GM13977 (cell line): ENCODE measurements at regions of chr3 and their contacts with region 1.

Region 1: DNA sequence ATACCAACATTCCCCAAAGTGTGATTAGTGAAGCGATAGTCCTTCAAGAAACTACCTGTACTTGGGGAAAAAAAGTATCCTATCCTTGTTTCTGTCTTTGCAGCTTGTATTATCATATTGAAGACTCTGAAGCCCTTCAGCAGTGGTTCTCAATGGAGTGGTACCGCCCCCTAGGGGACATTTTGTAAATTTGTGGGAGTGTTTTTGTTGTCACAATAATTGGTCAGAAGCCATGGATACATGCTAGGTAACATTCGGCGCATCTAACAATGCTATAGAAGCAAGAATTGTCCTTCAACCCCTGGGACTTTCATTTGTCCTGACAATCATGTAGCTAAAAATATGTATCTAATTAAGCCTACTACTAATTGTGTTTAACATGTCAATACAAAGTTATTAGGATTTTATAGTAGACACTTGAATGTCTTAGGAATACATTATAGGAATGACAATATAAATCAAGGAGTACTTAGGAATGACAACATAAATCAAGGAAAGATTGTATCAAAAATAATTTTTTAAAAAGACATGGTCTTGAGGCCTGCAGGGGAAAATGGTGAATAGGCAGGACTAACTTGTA is 53.7 kb downstream of the NMD3 start:
- DNase-seq: peak; percentile 25
- CTCF ChIP-seq: peak; percentile 73

Region 2: DNA sequence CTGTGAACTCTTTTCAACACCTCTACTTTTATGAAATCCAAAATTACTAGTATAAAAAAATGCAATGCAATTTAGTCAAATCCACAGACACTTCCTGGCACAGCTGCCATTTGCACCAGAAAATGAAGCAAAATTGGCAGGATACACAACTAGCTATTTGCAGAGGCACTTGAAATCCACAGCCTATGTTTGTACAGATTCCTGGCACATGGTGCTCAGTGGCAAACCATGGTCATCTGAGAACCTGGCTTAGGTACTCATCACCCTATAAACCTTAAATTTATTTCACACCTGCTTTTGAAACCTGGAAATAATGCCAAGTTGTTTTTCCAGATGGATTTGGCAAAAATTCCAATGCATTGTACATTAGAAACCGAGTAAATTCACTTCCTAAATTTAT is 539.0 kb before region 1 on chr3:
- in situ Hi-C with region 1: no loop called
- DNase-seq: no peak
- CTCF ChIP-seq: no peak

Region 3: GRCh38 chr3:160784848-160785247 is 490.0 kb before region 1 on chr3:
- in situ Hi-C with region 1: no loop called
- DNase-seq: no peak
- CTCF ChIP-seq: no peak

Region 4: GRCh38 chr3:160956806-160957205 is 318.0 kb before region 1 on chr3:
- in situ Hi-C with region 1: loop called (anchors 10 kb)
- DNase-seq: peak; percentile 39
- CTCF ChIP-seq: peak; percentile 67

Region 5: DNA sequence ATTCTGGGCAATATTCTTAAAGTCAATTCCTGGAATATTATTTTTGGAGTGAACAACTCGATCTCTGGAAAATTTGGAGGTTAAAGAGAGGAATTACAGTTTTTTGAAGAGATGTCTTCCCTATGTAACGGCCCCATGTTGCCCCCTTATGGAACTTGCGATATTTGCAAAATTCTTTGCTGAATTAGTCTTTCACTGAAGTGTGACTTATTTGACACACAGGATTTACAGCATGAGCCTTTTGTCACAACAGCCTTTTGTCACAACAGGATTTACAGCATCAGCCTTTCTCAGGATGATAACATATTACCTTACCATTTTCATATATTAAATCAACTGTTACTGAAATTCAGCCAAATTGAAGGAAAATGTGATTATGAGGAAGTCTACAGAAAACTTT is 134.3 kb after region 1 on chr3:
- in situ Hi-C with region 1: loop called (anchors 10 kb)
- DNase-seq: no peak
- CTCF ChIP-seq: peak; percentile 50